Endothelial cell of umbilical vein (primary cell): ENCODE measurements at regions of chr10 and their contacts with region 1.

Region 1: GRCh38 chr10:101367569-101368453 is 13.8 kb downstream of the BTRC start:
- DNase-seq: peak; percentile 90
- H3K4me3 ChIP-seq: no peak overlapping the region
- H3K27ac ChIP-seq: peak overlapping the region; percentile 57
- H3K4me1 ChIP-seq: peaks cover 16% of the 10 kb centered on the region
- H3K27me3 ChIP-seq: no peaks in the 10 kb centered on the region
- CTCF ChIP-seq: no peak
- POLR2A ChIP-seq: no peak

Region 2: DNA sequence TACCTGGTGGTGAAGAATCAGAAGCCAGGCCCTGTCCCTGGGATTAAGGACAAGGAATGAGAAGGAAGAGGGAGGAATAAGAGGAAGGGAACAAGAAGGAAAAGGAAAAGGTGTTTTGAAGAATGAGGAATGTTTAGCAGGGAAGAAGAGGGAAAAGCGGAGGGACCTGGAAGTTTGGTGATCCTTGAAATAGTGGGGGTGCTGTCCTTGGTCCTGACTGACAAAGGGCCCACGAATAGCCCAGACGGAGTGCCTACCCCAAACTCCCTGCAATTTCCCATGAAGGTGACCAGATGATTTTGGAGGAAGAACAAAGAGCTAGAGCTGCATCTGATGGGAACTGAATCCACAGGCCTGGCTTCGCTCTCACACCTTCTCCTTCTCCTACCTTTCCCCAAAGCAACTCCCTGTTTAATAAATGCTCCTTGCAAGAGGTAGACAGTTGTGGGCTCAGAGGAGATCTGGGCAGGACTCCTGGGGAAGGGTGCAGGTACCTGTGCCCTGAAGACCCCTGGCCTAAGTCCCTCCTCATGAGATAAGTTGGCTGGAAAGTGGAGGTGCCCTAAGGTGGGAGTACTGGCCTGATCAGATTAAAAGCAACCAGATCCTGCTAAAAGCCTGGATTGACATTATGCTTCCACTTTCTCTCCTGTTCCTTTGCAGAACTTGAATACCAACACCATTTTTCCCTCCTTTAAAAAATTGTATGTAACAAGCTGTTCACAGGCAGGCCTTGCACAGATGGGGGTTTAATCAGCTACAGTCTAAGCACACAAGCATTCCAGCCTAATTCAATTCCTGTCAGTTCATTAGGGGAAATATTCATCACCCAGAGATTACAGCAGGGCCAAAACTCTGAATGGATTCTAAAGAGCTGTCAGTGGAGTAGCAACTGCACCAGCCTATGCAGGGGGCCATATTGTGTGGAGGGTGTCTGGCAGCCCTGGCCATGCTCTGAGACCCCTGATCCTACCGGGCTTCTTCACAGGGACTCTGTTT is 286.6 kb before region 1 on chr10:
- CTCF ChIA-PET with region 1: no interaction called
- POLR2A ChIA-PET with region 1: no interaction called
- dilution Hi-C with region 1: no loop called
- intact Hi-C with region 1: no loop called
- DNase-seq: peak; percentile 11
- H3K4me3 ChIP-seq: no peak overlapping the region
- H3K27ac ChIP-seq: no peak overlapping the region
- H3K4me1 ChIP-seq: no peaks in the 10 kb centered on the region
- H3K27me3 ChIP-seq: peaks cover 2 to 9% of the 10 kb centered on the region in 2 experiments
- CTCF ChIP-seq: no peak
- POLR2A ChIP-seq: no peak

Region 3: DNA sequence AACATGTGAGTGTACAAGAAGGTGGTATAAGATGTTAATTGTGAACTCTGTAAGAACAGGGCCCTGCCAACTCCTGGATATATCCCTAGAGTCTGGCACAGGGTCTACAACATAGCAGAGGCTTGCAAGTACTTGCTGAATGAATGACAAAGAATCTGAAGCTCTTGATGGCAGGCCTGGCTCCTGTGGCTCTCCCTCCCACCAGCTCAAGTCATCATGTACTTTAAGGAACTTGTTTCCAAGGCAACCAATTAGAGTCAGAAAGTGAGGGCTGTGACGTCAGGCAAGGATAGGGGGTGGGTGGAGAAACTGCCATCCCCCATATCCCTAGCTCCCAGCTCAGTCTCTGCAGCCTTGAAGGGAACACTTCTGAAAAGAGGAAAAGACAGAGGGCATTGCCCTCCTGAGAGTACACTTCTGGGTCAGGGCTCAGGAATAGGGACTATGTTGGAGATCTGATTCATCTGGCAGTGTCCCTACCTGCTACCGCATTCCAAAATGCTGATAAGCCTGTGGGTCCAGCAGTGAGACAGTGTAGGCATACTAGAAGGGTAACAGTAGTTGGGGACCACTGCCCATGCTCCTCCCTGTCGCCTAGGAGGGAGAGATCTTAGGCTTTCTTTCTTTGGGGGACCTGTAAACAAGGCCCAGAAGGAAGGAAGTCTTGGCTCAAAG is 48.4 kb before region 1 on chr10:
- CTCF ChIA-PET with region 1: no interaction called
- POLR2A ChIA-PET with region 1: no interaction called
- dilution Hi-C with region 1: no loop called
- intact Hi-C with region 1: no loop called
- DNase-seq: no peak
- H3K4me3 ChIP-seq: no peak overlapping the region
- H3K27ac ChIP-seq: no peak overlapping the region
- H3K4me1 ChIP-seq: no peaks in the 10 kb centered on the region
- H3K27me3 ChIP-seq: peaks cover 3 to 16% of the 10 kb centered on the region in 2 experiments
- CTCF ChIP-seq: no peak
- POLR2A ChIP-seq: no peak

Region 4: DNA sequence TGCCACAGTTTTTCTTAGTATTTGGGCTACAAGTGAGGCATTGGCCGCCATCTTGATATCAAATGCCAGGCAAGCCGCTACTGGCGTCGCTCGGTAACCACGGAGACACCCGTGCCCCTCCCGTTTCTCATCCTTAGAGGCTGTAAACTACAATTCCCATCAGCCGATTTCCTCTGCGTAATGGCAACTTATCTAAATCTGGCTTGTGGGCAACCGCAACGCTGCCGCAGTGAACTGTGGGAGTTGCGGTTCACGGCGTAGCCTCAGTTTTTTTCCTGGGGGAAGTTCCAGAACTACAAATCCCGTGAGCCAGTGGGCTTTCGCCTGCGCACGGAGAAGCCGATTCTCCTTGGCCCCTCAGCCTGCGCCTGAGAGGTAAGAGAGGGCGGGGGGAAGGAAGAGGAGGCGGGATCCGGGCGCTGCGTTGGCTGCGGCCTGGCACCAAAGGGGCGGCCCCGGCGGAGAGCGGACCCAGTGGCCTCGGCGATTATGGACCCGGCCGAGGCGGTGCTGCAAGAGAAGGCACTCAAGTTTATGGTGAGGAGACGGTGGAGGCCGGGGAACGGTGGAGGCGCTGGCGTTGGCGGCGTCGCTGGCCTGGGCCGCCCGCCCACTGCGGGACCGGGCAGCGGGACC is 14.0 kb before region 1 on chr10 and contains the start of gene BTRC:
- CTCF ChIA-PET with region 1: interaction called, 8 read pairs
- POLR2A ChIA-PET with region 1: no interaction called
- dilution Hi-C with region 1: no loop called
- intact Hi-C with region 1: loop called (anchors 1 kb)
- DNase-seq: peak; percentile 100
- H3K4me3 ChIP-seq: peak within 1 kb of the TSS; percentile 76 to 97 (median 78)
- H3K27ac ChIP-seq: peak within 1 kb of the TSS; percentile 61
- H3K4me1 ChIP-seq: peaks cover 11% of the 10 kb centered on the region
- H3K27me3 ChIP-seq: peaks cover 5 to 6% of the 10 kb centered on the region in 2 experiments
- CTCF ChIP-seq: no peak
- POLR2A ChIP-seq: peak; percentile 72
- total RNA-seq, gene BTRC: 18.5 and 19.7 TPM in 2 replicates